Posterior vena cava (tissue), 2 donors: ENCODE measurements at regions of chr12 and their contacts with region 1.

Region 1: DNA sequence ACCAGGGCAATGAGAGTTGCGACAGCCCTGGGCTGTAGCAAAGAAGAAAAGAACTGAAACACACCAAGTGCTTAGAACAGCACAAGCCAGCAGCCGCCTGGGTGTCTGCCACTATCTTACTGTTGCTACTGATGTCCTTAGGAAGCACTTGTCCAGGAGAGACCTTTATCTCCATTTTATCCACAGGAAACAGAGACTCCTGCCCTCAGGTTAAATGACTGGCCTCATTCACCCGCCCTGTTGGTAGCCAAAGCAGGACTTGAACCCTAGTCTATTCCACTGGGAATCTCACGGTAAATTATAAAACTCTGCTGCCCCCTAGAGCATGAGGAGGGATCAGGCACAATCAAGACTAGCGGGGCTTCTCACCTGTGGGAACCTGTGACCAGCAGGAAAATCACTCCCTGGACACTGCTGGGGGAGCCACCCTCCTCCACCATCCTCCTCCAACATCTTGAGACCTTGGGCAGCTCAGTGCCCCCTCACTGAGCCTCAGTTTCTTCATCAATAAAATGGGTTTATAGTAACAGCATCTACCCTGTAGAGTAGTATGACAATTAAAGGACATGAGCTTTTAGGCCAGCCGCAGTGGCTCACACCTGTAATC is 20.5 kb upstream of the TESC start:
- DNase-seq: no peak

Region 2: GRCh38 chr12:117032593-117033381 is 86.9 kb before region 1 on chr12:
- intact Hi-C with region 1: loop called in 1 of 2 experiments (anchors 10 kb)
- DNase-seq: no peak

Region 3: DNA sequence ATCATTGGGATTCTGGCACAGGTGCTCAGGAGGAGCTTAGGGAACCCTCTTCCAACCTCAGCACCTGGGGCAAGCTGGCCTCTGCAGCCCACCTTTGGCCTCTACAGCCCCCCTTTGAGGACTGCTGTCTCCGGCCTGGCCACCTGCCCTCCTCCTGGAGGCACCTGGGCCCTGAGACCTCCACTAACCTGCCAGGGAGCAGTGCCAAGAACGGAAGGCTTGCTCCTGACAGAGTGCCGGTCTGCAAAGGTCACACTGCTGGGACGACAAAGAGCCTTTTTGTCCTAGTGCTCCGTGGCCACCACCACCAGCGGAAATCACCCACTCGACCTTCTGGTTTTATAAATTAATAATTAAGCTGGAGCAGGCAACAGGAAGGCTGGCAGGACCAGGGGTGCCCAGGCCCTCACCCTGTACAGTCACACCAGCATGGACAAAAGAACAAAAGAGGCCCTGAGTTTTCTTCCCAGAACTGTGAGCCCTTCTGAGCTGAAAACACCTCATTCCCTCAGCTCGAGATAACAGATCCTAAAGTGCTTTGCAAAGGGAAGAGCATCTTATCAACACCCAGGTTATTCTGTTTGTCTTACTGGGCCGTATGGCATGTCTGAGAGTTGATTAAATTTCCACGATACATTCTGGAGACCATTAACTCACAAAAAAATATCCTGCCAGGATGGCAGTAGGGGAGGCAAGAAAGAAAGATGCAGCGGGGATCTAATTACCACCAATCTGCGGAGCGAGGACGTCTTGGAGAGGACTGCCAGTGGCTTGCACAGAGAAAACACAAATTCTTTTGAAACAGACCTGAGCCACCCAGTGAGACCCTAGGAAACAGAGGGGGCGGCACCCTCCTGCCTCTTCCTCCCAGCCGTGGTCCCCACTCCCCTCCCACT is 28.6 kb before region 1 on chr12:
- intact Hi-C with region 1: no loop called
- DNase-seq: peak; percentile 49

Region 4: DNA sequence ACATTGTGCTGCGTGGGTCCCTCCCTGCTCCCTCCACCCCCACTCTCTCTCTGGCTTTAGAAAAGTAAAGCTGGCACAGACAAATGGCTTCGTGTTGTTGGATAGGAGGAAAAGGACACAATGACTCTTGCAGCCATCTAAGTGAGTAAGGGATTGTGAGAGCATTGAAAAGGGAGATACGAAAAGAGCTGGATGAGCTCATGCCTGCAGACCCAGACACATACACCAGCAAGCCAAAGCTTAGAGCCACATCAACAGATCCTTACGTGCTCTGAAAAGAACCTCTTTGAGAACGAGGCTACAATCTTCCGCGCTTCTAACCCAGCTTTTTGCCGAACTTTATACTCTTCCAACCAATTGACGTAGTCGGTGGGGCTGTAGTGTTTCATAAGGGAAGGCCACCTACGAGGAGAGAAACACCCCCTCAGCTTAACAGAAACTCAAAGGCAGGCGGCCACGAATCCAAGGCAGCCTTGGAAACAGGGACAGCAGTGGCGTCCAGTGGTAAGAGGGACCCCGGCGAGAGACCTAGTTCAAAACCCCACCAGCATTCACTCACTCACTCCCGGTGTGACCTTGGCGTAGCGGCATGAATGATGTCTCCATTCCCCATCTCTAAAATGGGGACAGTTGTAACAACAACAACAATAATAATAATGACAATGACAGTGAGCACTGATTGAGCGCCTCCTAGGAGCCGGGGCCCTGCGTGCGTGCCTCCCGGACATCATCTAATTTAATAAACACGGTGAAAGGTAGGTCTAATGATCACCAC is 69.5 kb after region 1 on chr12:
- intact Hi-C with region 1: no loop called
- DNase-seq: no peak